Left ventricle myocardium superior (tissue), 1 donor: ENCODE measurements at regions of chr14 and their contacts with region 1.

Region 1: DNA sequence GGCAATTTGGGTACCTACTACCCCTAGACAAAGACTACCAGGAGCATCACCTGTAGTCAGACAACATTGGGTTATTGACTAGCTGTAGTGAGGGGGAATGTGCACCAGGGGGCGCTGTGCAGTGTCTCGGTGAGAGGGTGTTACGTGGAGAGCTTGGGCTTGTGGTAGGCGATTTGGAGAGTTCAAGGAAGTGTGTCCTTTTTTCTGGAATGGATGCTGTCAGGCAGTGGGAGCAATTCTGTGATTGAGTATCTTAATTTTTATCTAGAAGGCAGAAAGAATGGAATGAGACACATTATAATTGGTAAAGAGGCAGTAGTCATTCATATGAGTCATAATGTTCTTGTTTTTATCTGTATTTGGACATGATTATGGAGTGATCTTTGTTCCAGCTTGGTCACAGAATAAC is 187.7 kb downstream of the GALC start:
- DNase-seq: no peak
- ATAC-seq: peak; percentile 29

Region 2: GRCh38 chr14:87508333-87508732 is 297.0 kb before region 1 on chr14:
- intact Hi-C with region 1: no loop called
- DNase-seq: no peak
- ATAC-seq: no peak

Region 3: GRCh38 chr14:87896393-87897380 is 91.4 kb after region 1 on chr14:
- intact Hi-C with region 1: loop called (anchors 5 kb)
- DNase-seq: no peak
- ATAC-seq: no peak